MCF 10A (cell line): ENCODE measurements at regions of chr9 and their contacts with region 1.

Region 1: GRCh38 chr9:130940693-130941576 is 1.9 kb upstream of the FIBCD1 start:
- DNase-seq: peak; percentile 87
- H3K4me3 Mint-ChIP-seq: no peak overlapping the region
- H3K27ac Mint-ChIP-seq: no peak overlapping the region
- H3K4me1 Mint-ChIP-seq: peaks cover 24% of the 10 kb centered on the region
- H3K27me3 Mint-ChIP-seq: peaks cover 11% of the 10 kb centered on the region
- CTCF ChIP-seq: peak; percentile 81

Region 2: DNA sequence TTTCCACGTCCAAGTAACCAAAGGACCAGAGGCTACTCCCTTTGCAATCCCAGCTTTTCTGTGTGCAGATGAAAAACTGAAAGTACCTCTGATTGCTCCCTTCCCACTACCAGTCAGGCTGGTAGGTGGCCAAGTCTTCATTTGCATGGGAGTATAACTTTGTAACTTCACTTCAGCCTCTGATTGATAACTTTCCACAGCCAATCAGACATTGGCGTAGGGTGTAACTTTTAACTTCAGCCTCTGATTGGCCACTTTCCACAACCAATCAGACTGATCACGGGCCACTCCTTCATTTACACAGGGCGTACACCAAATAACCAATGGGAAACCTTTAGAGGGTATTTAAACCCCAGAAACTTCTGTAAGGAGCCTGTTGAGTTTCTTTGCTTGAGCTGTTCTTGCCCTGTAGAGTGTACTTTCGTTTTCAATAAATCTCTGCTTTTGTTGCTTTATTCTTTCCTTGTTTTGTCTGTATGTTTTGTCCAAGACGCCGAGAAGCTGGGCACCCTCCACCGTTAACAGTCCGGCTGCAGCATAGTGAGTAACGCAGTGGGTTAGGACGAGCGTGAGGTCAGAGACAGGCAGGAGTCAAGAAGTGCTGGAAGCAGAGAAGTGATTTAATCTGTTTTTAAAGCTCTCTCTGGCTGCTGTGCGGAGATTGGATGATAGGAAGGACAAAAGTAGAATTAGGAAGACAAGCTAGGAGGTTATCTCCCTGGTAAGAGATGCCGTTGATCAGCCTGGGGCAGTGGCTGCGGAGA is 250.8 kb before region 1 on chr9:
- CTCF ChIA-PET with region 1: no interaction called
- POLR2A ChIA-PET with region 1: no interaction called
- intact Hi-C with region 1: no loop called
- DNase-seq: peak; percentile 99
- H3K4me3 Mint-ChIP-seq: peak overlapping the region; percentile 63
- H3K27ac Mint-ChIP-seq: peak overlapping the region; percentile 2
- H3K4me1 Mint-ChIP-seq: peaks cover 18% of the 10 kb centered on the region
- H3K27me3 Mint-ChIP-seq: no peaks in the 10 kb centered on the region
- CTCF ChIP-seq: no peak

Region 3: GRCh38 chr9:130707225-130707976 is 233.5 kb before region 1 on chr9:
- CTCF ChIA-PET with region 1: interaction called, 8 read pairs
- POLR2A ChIA-PET with region 1: no interaction called
- intact Hi-C with region 1: loop called (anchors 1 kb)
- DNase-seq: peak; percentile 80
- H3K4me3 Mint-ChIP-seq: no peak overlapping the region
- H3K27ac Mint-ChIP-seq: no peak overlapping the region
- H3K4me1 Mint-ChIP-seq: no peaks in the 10 kb centered on the region
- H3K27me3 Mint-ChIP-seq: no peaks in the 10 kb centered on the region
- CTCF ChIP-seq: peak; percentile 79

Region 4: GRCh38 chr9:130895481-130896232 is 45.3 kb before region 1 on chr9:
- CTCF ChIA-PET with region 1: no interaction called
- POLR2A ChIA-PET with region 1: interaction called, 3 read pairs
- intact Hi-C with region 1: loop called (anchors 1 kb)
- DNase-seq: peak; percentile 3
- H3K4me3 Mint-ChIP-seq: no peak overlapping the region
- H3K27ac Mint-ChIP-seq: peak overlapping the region; percentile 29
- H3K4me1 Mint-ChIP-seq: no peaks in the 10 kb centered on the region
- H3K27me3 Mint-ChIP-seq: peaks cover 7% of the 10 kb centered on the region
- CTCF ChIP-seq: no peak

Region 5: DNA sequence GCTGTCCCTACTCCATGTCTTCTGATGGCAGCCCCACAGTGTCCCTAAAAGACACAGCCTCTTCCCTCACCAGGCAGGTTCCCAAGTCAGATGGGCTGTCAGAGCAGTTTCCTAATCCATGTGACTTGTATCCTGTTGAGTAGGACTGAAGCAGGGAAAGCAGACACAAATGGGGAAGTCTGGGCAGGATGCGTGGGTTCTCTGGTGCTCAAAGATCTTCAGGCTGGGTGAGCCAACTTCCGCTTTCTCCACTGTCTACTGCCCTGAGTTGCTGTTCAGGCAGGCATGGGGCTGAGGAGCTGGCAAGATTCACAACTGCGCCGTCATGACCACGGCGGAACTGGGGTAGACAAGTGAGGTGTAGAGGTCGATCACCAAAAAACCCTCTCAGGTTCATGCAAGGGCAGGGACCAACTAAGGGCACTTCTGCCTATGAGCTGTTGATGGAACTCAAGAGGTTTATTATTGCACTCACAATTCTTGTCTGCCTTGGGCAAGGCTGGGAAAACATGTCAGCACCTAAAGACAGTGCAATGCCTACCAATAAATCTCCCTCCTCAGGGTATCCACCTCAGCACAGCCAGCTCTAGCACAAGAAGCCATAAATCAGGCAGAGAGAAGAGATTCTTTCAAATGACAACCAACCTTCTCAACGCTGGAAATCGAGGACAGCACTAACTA is 715.6 kb after region 1 on chr9:
- CTCF ChIA-PET with region 1: no interaction called
- POLR2A ChIA-PET with region 1: no interaction called
- intact Hi-C with region 1: no loop called
- DNase-seq: no peak
- H3K4me3 Mint-ChIP-seq: no peak overlapping the region
- H3K27ac Mint-ChIP-seq: peak overlapping the region; percentile 7
- H3K4me1 Mint-ChIP-seq: peaks cover 36% of the 10 kb centered on the region
- H3K27me3 Mint-ChIP-seq: no peaks in the 10 kb centered on the region
- CTCF ChIP-seq: no peak